ENCODE measurements at regions of chr6 and their contacts with region 1.

Region 1: DNA sequence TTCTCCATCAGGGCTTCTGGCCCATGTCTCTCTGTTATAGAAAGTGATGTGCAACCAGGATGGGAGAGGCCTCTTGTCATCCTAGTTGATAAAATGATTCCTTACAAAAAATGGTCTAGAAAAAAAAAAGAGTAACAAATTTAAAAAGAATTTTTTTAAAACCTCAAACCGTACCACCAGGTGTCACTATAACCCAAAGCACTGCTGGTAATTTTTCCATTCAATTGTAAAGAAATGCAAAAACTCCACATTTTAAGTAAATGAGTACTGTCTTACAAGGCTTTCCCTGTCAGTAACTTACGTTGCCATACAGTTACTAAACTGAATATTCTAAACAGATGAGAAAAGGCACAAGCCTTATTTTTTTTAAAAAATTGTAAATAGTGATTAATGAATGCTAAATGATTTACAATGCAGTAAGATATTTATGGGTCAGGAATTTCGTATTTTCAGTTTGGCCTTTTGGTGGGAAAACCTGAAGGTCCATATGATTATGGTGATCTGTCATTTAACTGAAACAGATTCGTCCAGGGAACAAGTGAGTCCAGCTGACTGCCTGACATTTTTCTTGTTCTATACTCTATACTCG is 95.4 kb downstream of the OGFRL1 start:
- DNase-seq: no peak
- H3K4me3 ChIP-seq: no peak overlapping the region
- H3K27me3 ChIP-seq: no peaks in the 10 kb centered on the region
- CTCF ChIP-seq: peak; percentile 50

Region 2: GRCh38 chr6:71478834-71479541 is 95.0 kb after region 1 on chr6:
- CTCF ChIA-PET with region 1: interaction called, 12 read pairs
- POLR2A ChIA-PET with region 1: interaction called, 9 read pairs
- DNase-seq: peak; percentile 91
- H3K4me3 ChIP-seq: no peak overlapping the region
- H3K27me3 ChIP-seq: no peaks in the 10 kb centered on the region
- CTCF ChIP-seq: no peak

Measured in BJ (cell line).